Ascending aorta (tissue), 2 donors: ENCODE measurements at regions of chr2 and their contacts with region 1.

Region 1: DNA sequence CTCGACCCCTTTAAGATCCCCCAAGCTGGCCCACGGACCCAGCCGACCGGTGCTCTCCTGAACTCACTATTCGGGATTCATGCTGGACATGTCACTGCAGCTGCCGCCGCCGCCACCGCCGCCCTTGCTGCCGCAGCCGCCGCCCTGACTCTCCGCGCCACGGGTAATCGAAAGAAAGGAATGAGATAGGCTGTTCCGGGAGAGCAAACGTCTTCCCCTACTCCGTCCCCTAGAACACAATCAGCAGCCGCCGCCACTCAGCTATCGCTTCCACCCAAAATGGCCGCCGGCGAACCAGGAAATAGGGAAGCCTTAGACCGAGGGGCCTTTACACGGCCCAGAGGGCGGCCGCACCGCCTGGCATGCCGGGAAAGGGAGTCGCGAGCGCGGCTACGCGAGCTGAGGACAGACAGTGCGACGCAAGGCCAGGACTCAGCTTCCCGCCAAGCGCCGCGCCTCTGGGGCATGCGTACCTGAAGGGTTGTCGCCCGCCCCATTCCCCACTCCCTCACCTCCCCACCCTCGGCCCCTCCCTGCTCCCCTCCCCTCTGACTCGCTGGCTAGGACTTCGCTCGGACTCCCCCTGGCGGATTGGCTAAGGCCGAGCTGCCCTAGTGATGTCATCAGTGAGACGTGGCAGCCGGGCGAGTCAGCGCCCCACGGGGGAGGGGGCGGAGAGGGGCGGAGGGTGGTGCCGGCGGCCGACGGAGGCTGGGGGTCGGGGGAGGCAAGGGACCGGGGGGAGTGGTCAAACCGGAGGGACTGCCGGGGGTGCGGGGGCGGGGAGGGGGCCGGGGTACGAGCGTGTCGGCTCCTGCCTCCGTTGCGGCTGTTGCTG is at the start of gene RAB1A:
- DNase-seq: peak; percentile 98 to 100
- H3K4me3 ChIP-seq: peak within 1 kb of the TSS; percentile 87 to 99
- H3K27ac ChIP-seq: peak within 1 kb of the TSS; percentile 98 to 99
- H3K4me1 ChIP-seq: peaks cover 14 to 29% of the 10 kb centered on the region in 2 donors
- H3K27me3 ChIP-seq: no peaks in the 10 kb centered on the region
- CTCF ChIP-seq: peak; percentile 13 to 50 (median 39)
- total RNA-seq, gene RAB1A: 56.4 TPM

Region 2: DNA sequence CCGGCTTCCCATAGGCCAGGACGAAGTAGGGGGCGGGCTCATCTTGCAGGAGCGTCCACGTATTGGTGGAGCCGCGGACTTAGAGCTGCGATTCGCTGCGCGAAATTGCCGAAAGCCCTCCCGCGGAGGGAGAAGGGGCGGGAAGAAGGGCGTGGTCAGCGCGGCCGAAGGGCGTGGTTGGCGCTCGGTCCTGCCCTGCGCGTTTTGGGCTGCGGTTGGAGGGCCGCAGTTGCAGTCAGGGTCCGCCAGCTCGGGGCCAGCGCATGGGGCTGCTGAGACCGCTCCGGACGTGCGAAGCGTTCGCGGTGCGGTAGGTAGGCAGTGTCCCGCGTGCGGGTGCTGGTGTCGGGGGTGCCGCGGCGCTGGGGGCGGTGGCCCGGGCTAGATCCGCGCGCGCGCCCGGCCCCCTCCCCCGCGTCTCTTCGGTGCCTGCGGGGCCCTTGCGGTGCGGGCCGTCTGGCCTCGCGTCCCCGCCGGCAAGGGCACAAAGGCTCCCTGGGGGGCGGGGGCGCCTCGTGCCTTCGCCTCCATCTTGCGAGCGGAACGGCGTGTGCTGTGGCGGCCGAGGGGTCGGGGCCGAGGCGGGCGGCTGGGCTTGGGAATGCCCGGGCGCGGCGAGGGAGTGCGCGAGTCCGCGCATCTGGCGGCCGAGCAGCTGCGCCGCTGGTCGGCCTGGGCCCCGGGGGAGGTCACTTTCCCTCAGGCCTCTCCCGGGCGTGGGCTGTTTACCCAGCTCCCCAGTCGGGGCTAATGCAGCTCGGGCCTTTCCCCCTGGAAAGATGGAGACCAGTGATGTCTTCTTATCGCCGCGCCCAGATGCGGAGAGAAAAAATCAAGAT is 73.6 kb before region 1 on chr2 and contains the start of gene CEP68:
- intact Hi-C with region 1: loop called (anchors 1 kb)
- DNase-seq: peak; percentile 85 to 98
- H3K4me3 ChIP-seq: peak within 1 kb of the TSS; percentile 82 to 94
- H3K27ac ChIP-seq: peak within 1 kb of the TSS; percentile 78 to 86
- H3K4me1 ChIP-seq: peaks cover 4 to 30% of the 10 kb centered on the region in 2 donors
- H3K27me3 ChIP-seq: no peaks in the 10 kb centered on the region
- CTCF ChIP-seq: no peak
- total RNA-seq, gene CEP68: 30.8 TPM

Region 3: DNA sequence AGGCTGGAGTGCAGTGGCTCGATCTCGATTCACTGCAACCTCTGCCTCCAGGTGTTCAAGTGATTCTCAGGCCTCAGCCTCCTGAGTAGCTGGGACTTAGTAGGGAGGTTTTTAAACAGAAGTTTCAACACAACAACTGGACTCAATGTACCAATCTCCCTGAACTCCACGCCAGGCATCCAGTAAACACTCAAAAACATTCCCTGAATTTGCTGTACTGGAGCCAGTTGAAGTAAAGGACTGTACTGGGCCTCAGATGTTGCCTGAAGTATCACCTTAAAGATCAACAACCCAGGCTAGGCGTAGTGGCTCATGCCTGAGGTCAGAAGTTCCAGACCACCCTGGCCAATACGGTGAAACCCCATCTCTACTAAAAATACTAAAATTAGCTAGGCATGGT is 22.5 kb before region 1 on chr2:
- intact Hi-C with region 1: loop called (anchors 2 kb)
- DNase-seq: no peak
- H3K4me3 ChIP-seq: no peak overlapping the region
- H3K27ac ChIP-seq: no peak overlapping the region
- H3K4me1 ChIP-seq: peaks cover 1 to 8% of the 10 kb centered on the region in 2 donors
- H3K27me3 ChIP-seq: no peaks in the 10 kb centered on the region
- CTCF ChIP-seq: no peak

Region 4: DNA sequence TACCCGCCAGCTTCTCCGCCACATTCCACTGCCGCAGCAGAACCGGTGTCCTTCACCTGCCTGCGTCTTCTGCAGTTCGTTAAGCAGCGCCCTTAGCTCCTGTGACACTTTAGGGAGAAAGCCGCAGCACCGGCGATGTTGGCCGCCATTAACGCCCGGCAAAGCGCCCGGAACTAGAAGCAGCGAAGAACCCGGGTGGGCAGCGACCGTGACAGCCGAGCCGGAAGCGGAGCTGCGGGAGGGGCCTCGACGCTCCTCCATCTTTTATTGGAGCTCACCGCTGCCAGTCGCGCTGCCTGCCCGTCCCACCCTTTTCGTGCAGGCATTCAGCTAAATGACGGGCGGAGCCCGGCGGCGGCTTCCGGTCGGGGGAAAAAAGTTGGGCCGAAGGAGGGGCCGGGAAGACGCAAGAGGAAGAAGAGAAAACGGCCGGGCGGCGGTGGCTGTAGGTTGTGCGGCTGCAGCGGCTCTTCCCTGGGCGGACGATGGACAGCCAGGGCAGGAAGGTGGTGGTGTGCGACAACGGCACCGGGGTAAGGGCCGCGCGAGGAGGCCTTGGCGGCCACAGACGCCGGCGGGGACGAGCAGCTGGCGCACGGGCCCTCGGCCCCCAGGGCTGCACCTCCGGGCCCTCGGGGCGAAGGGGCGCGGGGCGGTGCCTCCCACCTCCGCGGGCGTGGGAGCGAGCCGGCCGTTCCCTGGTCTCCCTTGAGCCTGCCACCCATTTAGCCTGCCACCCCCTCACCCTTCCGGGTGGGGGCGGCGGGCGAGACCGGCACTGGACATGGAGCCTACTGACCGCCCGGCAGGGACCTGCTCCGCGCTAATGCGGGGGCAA is 97.6 kb after region 1 on chr2 and contains the start of gene ACTR2:
- intact Hi-C with region 1: loop called (anchors 2 kb)
- DNase-seq: peak; percentile 86 to 98
- H3K4me3 ChIP-seq: peak within 1 kb of the TSS; percentile 66 to 100
- H3K27ac ChIP-seq: peak within 1 kb of the TSS; percentile 89 to 100
- H3K4me1 ChIP-seq: peaks cover 3 to 36% of the 10 kb centered on the region in 2 donors
- H3K27me3 ChIP-seq: no peaks in the 10 kb centered on the region
- CTCF ChIP-seq: no peak
- total RNA-seq, gene ACTR2: 78.0 TPM

Region 5: GRCh38 chr2:65329525-65329924 is 199.5 kb after region 1 on chr2:
- intact Hi-C with region 1: no loop called
- DNase-seq: no peak
- H3K4me3 ChIP-seq: no peak overlapping the region
- H3K27ac ChIP-seq: no peak overlapping the region
- H3K4me1 ChIP-seq: no peaks in the 10 kb centered on the region
- H3K27me3 ChIP-seq: no peaks in the 10 kb centered on the region
- CTCF ChIP-seq: no peak